ENCODE measurements at regions of chr12 and their contacts with region 1.

Region 1: DNA sequence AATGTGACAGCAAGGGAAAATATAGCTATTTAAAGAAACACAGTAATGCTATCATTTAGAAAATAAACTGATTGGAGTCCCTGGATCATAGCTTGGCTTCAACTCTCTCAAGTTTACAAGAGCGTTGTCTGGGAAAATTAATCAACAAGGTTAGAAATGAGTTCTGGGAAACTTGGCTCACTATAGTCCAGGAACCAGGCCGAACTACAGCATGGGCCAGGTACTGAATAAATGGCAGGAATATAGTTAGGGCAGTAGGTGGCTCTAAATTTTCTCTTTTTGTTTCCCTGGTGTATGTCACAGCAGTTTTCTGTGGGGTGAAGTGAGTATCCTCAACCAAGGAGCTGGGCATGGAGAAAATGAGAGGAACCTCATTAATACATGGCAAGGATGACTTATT is 72.4 kb downstream of the PLBD1 start:
- DNase-seq: no peak
- ATAC-seq: no peak
- H3K4me3 ChIP-seq: no peak overlapping the region
- H3K4me3 Mint-ChIP-seq: no peak overlapping the region
- H3K27ac ChIP-seq: no peak overlapping the region
- H3K27ac Mint-ChIP-seq: peak overlapping the region; percentile 71
- H3K4me1 ChIP-seq: no peaks in the 10 kb centered on the region
- H3K4me1 Mint-ChIP-seq: peaks cover 2% of the 10 kb centered on the region
- H3K27me3 ChIP-seq: no peaks in the 10 kb centered on the region
- H3K27me3 Mint-ChIP-seq: no peaks in the 10 kb centered on the region
- CTCF ChIP-seq: no peak

Region 2: DNA sequence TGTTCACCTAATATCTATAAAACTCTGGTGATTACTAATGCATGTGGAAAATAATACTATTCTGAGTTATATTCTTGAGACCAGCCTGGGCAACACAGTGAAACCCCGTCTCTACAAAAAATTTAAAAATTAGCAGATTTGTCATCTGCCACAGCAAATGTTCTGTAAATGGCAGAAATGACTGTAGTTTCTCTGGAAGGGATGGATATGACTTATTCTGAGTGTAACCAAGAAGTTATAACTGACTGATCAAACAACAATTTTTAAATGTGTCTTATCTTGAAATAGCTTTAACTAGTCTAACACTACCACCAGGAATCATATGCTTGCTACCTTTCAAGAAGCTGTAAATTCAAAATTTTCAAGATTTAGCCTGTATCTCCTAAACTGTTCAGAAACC is 16.3 kb before region 1 on chr12:
- CTCF ChIA-PET with region 1: no interaction called
- POLR2A ChIA-PET with region 1: no interaction called
- intact Hi-C with region 1: loop called in 1 of 2 experiments (anchors 2 kb)
- DNase-seq: no peak
- ATAC-seq: no peak
- H3K4me3 ChIP-seq: no peak overlapping the region
- H3K4me3 Mint-ChIP-seq: no peak overlapping the region
- H3K27ac ChIP-seq: no peak overlapping the region
- H3K27ac Mint-ChIP-seq: no peak overlapping the region
- H3K4me1 ChIP-seq: no peaks in the 10 kb centered on the region
- H3K4me1 Mint-ChIP-seq: peaks cover 9% of the 10 kb centered on the region
- H3K27me3 ChIP-seq: no peaks in the 10 kb centered on the region
- H3K27me3 Mint-ChIP-seq: no peaks in the 10 kb centered on the region
- CTCF ChIP-seq: no peak

Region 3: DNA sequence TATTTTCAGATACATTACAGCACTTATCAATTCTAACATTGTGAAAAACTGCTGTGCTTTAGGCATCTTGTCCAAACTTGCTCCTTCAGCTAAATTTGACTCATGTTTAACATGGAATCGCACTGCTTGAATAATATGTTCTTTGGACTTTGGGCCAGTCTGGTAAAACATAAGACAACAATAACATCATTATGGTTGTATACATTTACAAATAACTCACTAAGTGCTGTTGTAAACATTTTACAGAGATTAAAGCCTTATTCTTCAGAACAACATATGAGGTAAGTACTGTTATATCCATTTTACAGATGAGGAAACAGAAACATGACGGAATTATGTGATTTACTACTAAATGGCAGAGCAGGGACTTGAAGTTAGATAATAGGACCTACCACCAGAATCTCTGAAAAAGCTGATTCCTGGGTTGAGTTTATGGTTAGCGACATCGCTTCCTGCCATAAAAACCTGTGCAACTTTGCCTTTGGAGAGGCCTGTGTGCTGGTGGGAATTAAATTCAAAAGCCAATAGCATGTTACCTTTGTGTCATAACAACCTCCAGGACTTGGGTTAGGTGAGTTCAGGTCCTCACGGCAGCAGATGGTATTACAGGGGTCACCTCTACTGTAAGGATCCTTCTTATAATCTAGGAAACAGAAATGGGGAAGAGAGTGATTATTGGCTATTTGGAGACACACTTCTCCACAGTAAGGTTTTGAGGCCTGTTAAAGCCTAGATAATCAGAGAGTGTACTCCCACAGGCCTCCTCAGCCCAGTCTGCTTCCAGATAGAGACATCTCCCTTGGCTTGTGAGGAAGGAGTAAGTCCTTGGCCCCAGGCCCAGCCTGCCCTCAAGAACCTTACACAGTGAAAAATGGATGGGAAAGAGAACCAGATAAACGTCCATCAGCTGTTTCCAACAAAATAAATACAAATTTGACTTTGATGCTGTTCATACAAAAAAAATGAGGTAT is 10.6 kb after region 1 on chr12:
- CTCF ChIA-PET with region 1: no interaction called
- POLR2A ChIA-PET with region 1: no interaction called
- intact Hi-C with region 1: no loop called
- DNase-seq: no peak
- ATAC-seq: no peak
- H3K4me3 ChIP-seq: no peak overlapping the region
- H3K4me3 Mint-ChIP-seq: no peak overlapping the region
- H3K27ac ChIP-seq: no peak overlapping the region
- H3K27ac Mint-ChIP-seq: peak overlapping the region; percentile 38
- H3K4me1 ChIP-seq: no peaks in the 10 kb centered on the region
- H3K4me1 Mint-ChIP-seq: peaks cover 2% of the 10 kb centered on the region
- H3K27me3 ChIP-seq: no peaks in the 10 kb centered on the region
- H3K27me3 Mint-ChIP-seq: no peaks in the 10 kb centered on the region
- CTCF ChIP-seq: no peak

Region 4: GRCh38 chr12:14795028-14795448 is 299.7 kb after region 1 on chr12:
- CTCF ChIA-PET with region 1: no interaction called
- POLR2A ChIA-PET with region 1: no interaction called
- intact Hi-C with region 1: loop called in 1 of 2 experiments (anchors 10 kb)
- DNase-seq: no peak
- ATAC-seq: no peak
- H3K4me3 ChIP-seq: no peak overlapping the region
- H3K4me3 Mint-ChIP-seq: no peak overlapping the region
- H3K27ac ChIP-seq: no peak overlapping the region
- H3K27ac Mint-ChIP-seq: no peak overlapping the region
- H3K4me1 ChIP-seq: no peaks in the 10 kb centered on the region
- H3K4me1 Mint-ChIP-seq: peaks cover 4% of the 10 kb centered on the region
- H3K27me3 ChIP-seq: no peaks in the 10 kb centered on the region
- H3K27me3 Mint-ChIP-seq: no peaks in the 10 kb centered on the region
- CTCF ChIP-seq: no peak